A673 (cell line): ENCODE measurements at regions of chr11 and their contacts with region 1.

Region 1: DNA sequence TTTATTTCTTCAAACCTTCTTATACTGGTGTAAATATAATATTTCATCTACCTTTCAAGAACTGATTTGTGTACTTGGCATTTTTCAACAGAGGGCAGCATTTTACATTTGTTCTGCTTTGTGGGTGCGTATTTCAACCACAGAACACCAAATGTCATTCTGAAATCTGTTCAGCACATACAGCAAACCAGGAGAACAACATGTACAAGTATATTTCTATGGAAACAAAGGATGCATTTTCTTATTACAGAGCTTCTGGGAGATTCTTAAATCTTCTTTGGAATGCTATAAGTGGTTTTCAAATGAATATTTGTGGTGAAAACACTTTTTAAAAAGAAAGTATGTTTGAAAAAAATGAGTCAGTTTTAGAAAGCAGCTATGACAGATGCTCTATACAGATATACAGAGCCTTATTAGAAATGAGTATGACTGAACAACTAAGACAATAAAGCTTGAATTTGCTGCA is 946.0 kb downstream of the FAM181B start:
- DNase-seq: peak; percentile 43
- H3K4me3 ChIP-seq: no peak overlapping the region
- H3K27ac ChIP-seq: no peak overlapping the region
- H3K4me1 ChIP-seq: no peaks in the 10 kb centered on the region
- H3K27me3 ChIP-seq: no peaks in the 10 kb centered on the region
- CTCF ChIP-seq: peak; percentile 52

Region 2: DNA sequence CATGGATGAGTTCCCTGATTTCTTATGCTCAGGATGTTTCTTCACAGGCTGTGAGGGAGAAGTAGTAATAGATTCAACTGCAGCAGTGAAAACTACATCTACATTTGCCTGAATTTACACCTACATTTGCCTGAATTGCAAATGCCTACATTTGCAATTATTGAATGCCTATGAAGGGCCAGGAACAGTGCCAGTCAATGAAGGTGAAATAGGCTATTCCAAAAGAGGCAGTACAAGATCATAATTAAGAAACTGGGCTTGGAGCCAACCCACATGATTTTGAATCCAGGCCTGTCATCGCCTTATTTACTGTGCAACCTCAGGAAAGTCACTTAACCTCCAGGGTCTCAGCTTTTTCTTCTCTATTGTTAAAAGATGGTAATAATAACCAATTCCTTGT is 407.2 kb before region 1 on chr11:
- CTCF ChIA-PET with region 1: no interaction called
- POLR2A ChIA-PET with region 1: no interaction called
- intact Hi-C with region 1: no loop called
- DNase-seq: peak; percentile 74
- H3K4me3 ChIP-seq: no peak overlapping the region
- H3K27ac ChIP-seq: no peak overlapping the region
- H3K4me1 ChIP-seq: peaks cover 13% of the 10 kb centered on the region
- H3K27me3 ChIP-seq: no peaks in the 10 kb centered on the region
- CTCF ChIP-seq: no peak

Region 3: GRCh38 chr11:81804858-81805257 is 17.2 kb after region 1 on chr11:
- CTCF ChIA-PET with region 1: no interaction called
- POLR2A ChIA-PET with region 1: no interaction called
- intact Hi-C with region 1: loop called (anchors 1 kb)
- DNase-seq: no peak
- H3K4me3 ChIP-seq: no peak overlapping the region
- H3K27ac ChIP-seq: no peak overlapping the region
- H3K4me1 ChIP-seq: no peaks in the 10 kb centered on the region
- H3K27me3 ChIP-seq: no peaks in the 10 kb centered on the region
- CTCF ChIP-seq: no peak

Region 4: DNA sequence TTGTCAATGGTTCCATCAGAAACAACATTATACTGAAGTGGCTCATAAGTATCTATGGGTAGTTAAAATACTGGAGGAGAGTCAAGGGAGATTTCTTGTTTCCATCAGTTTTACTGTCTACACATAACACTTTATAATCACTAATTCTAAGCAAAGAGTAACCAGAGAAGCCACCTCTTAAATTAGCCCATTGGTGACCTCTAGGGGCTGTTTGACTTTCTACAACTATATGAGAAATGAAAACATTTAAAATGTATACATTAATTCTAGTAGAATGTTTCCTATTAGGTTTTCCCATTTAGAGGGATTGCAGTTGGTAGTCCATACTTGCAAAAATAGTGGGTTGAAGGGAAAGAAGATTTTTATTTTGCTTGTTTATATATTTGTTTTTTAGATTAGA is 441.7 kb after region 1 on chr11:
- CTCF ChIA-PET with region 1: no interaction called
- POLR2A ChIA-PET with region 1: no interaction called
- intact Hi-C with region 1: loop called (anchors 2 kb)
- DNase-seq: peak; percentile 58
- H3K4me3 ChIP-seq: no peak overlapping the region
- H3K27ac ChIP-seq: no peak overlapping the region
- H3K4me1 ChIP-seq: no peaks in the 10 kb centered on the region
- H3K27me3 ChIP-seq: no peaks in the 10 kb centered on the region
- CTCF ChIP-seq: peak; percentile 71

Region 5: GRCh38 chr11:82270870-82271269 is 483.3 kb after region 1 on chr11:
- CTCF ChIA-PET with region 1: no interaction called
- POLR2A ChIA-PET with region 1: interaction called, 16 read pairs
- intact Hi-C with region 1: no loop called
- DNase-seq: no peak
- H3K4me3 ChIP-seq: no peak overlapping the region
- H3K27ac ChIP-seq: no peak overlapping the region
- H3K4me1 ChIP-seq: no peaks in the 10 kb centered on the region
- H3K27me3 ChIP-seq: no peaks in the 10 kb centered on the region
- CTCF ChIP-seq: no peak